Testis (tissue), 5 donors: ENCODE measurements at regions of chr17 and their contacts with region 1.

Region 1: DNA sequence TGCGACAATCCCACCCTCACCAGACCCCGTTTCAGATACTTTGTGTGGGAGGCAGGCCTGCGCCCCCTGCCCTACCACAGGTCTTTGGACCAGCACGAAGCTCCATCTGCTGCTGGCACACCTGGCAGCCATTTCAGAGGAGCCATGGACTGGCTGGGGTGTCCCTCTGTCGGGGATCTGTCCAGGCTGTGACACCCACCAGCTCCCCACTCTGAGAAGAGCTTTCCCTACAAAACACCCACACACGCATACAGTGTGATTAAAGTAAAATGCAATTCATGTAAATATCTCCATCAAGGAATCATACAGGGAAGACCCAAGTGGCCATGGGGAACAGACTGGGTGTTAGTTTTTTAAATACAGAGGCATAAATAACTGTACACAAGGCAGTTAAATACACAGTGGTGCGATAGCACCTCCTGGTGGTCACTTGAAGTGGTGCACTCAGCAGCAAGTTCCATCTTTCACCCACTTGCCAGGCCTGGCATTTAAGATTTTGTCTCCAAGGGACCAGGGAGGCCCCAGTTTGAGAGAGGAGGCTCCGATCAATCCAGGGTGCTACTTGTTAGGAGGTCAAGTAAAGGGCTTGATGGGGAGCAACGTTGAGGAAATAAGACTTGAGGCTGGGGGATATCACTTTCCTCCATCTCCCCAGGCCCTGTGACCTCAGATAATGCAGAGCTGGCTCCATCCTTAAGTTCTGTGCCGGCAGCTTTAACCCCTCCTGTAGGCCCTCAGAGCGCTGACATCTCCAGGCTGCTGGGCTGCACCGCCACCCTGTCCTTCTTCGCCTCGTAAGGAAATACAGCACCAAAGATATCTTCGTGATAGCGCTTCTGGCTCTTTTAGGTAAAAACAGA is 43.6 kb downstream of the NOS2 start:
- DNase-seq: peak; percentile 73
- H3K4me3 ChIP-seq: no peak overlapping the region
- H3K27ac ChIP-seq: no peak overlapping the region
- H3K4me1 ChIP-seq: no peaks in the 10 kb centered on the region
- H3K27me3 ChIP-seq: no peaks in the 10 kb centered on the region
- CTCF ChIP-seq: peak; percentile 74 to 95 (median 90)
- POLR2A ChIP-seq: no peak

Region 2: GRCh38 chr17:27630607-27631410 is 125.9 kb before region 1 on chr17 and contains the start of gene LGALS9:
- intact Hi-C with region 1: no loop called
- DNase-seq: no peak
- H3K4me3 ChIP-seq: no peak within 1 kb of the TSS
- H3K27ac ChIP-seq: peak within 1 kb of the TSS in 1 of 2 donors; percentile 31
- H3K4me1 ChIP-seq: peaks cover 19% of the 10 kb centered on the region
- H3K27me3 ChIP-seq: no peaks in the 10 kb centered on the region
- CTCF ChIP-seq: no peak
- POLR2A ChIP-seq: no peak
- total RNA-seq, gene LGALS9: 7.2 to 7.4 TPM

Region 3: DNA sequence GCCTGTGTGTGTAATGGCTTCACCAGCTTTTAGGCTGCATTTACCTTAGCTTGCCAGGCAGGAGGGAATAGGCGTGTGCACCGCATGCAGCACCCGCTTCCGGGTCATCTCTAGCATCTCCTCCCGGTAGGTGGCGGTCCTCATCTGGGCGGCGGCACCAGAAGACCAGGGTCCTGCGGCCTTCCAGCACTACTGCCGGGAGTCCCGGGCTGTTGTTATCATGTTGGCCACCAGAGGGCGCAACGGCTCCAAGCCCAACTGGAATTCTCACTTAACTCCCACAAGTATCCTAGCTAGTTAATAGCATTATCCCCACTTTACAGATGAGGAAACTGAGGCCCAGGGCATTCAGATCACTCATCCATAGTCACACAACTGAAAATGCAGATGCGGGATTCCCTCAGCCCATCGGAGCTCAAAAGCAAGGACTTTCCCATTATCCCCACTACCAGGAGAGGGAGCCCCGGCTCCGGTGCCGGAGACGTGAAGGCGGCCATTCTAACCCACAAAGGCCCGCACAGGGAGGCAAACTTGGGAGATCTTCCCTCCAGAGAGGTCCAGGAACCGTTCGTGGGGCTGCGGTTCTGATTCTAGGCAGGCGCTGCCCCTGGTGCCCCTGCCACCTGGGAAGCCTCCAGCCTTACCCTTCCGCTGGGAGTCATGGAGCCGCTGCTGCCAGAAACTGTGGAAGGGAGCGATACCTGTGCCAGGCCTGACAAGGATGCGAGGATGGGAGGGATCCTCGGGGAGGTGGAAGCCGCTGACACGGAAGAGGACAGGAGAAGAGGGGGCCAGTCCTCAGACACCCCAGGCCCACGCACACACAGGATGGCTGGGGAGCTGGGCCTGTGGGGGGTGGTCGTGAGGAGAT is 101.9 kb before region 1 on chr17:
- intact Hi-C with region 1: loop called (anchors 5 kb)
- DNase-seq: peak; percentile 84
- H3K4me3 ChIP-seq: peak overlapping the region in 1 of 2 donors; percentile 10
- H3K27ac ChIP-seq: no peak overlapping the region
- H3K4me1 ChIP-seq: no peaks in the 10 kb centered on the region
- H3K27me3 ChIP-seq: no peaks in the 10 kb centered on the region
- CTCF ChIP-seq: peak; percentile 85 to 95 (median 91)
- POLR2A ChIP-seq: no peak

Region 4: GRCh38 chr17:27692766-27693165 is 64.0 kb before region 1 on chr17:
- intact Hi-C with region 1: no loop called
- DNase-seq: no peak
- H3K4me3 ChIP-seq: no peak overlapping the region
- H3K27ac ChIP-seq: no peak overlapping the region
- H3K4me1 ChIP-seq: no peaks in the 10 kb centered on the region
- H3K27me3 ChIP-seq: no peaks in the 10 kb centered on the region
- CTCF ChIP-seq: no peak
- POLR2A ChIP-seq: no peak